A549 (cell line): ENCODE measurements at regions of chr7 and their contacts with region 1.

Region 1: DNA sequence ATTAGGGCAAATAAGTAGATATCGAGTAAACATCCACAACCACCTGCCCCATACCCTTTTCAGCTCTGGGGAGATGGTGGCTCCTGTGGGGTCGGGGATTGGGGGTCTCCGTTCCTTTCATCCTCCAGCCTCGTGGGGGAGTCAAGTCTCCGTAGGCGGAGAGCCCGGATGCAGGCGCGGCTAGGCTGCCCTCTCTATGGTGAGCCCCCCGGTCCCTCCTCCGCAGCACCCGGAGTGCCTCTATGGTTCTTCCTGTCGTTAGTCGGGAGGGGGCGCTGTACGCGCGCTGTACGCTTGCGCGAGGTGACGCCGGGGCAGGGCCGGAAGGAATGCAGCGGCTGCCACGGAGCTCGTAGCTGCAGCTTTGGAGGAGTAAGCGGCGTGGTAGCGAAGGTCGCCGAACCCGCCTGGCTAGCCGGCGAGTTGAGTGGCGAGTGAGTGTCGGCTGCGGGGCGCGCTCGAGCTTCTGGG is 14.8 kb upstream of the MMD2 start:
- DNase-seq: peak; percentile 74 to 95
- ATAC-seq: peak; percentile 96 to 98
- H3K4me3 ChIP-seq: peak overlapping the region; percentile 87
- H3K27ac ChIP-seq: peak overlapping the region; percentile 92 to 95
- H3K4me1 ChIP-seq: peaks cover 9% of the 10 kb centered on the region; the same call in 1 of the 3 replicates
- CTCF ChIP-seq: peak; percentile 85
- EP300 ChIP-seq: no peak
- POLR2A ChIP-seq: peak; percentile 94
- RAD21 ChIP-seq: peak; percentile 67

Region 2: GRCh38 chr7:4906682-4907081 is 67.1 kb before region 1 on chr7:
- CTCF ChIA-PET with region 1: no interaction called
- POLR2A ChIA-PET with region 1: no interaction called
- DNase-seq: peak in 1 of 2 experiments; percentile 37
- ATAC-seq: peak in 1 of 2 experiments; percentile 42; a peak in 2 of 6 replicates
- H3K4me3 ChIP-seq: no peak overlapping the region
- H3K27ac ChIP-seq: no peak overlapping the region
- H3K4me1 ChIP-seq: no peaks in the 10 kb centered on the region
- CTCF ChIP-seq: no peak
- EP300 ChIP-seq: no peak
- POLR2A ChIP-seq: no peak
- RAD21 ChIP-seq: no peak

Region 3: GRCh38 chr7:4951903-4952636 is 21.7 kb before region 1 on chr7:
- CTCF ChIA-PET with region 1: interaction called, 21 read pairs
- POLR2A ChIA-PET with region 1: no interaction called
- DNase-seq: no peak
- ATAC-seq: peak; percentile 74 to 88
- H3K4me3 ChIP-seq: no peak overlapping the region
- H3K27ac ChIP-seq: no peak overlapping the region
- H3K4me1 ChIP-seq: no peaks in the 10 kb centered on the region
- CTCF ChIP-seq: no peak
- EP300 ChIP-seq: no peak
- POLR2A ChIP-seq: no peak
- RAD21 ChIP-seq: no peak

Region 4: DNA sequence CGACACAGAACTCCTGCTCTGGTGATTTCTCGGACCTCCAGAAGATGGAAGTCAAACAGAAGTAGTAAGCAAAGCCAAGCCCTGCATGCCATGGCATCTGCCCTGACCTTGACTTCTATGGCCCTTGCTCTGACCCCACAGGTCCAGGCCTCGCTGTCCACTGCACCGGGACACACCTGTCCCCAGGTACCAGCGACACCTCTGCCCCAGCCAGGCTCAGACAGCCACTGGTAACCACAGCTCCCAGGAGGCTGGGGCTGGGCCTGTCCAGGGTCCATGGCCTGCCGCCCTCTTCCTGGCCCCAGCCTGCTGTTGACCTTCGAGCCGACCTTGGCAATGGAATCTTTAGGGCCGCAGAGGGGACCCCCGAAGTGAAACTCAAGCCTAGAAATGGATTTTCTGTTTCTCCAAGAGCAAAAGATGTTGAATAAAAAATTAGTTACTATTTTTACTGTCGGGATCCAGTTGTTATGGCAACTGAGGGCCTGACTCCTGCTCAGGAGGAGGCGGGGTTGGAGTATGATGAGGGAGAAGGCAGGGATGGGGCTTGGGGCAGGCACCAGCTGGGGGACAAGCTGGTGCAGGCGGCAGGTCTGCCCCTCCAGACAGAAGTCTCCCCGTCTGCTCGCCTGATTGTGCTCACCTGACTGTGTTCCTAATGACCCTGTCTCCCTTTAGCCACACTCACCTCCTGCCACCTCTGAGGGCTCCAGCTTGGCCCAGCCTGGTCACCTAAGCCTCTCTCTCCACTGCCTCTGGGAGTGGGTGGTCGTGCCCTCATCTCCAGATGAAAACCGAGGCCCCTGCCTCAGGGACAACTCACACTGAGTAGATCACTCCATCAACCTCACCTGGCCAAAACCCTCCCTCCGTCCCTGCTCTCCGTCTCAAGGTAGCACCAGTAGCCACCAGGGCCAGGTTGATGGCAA is 10.6 kb before region 1 on chr7:
- CTCF ChIA-PET with region 1: interaction called, 16 read pairs
- POLR2A ChIA-PET with region 1: no interaction called
- DNase-seq: no peak
- ATAC-seq: peak; percentile 18 to 40; a peak in 3 of 6 replicates
- H3K4me3 ChIP-seq: no peak overlapping the region
- H3K27ac ChIP-seq: no peak overlapping the region
- H3K4me1 ChIP-seq: no peaks in the 10 kb centered on the region
- CTCF ChIP-seq: no peak
- EP300 ChIP-seq: no peak
- POLR2A ChIP-seq: no peak
- RAD21 ChIP-seq: no peak

Region 5: GRCh38 chr7:5086256-5086655 is 112.5 kb after region 1 on chr7:
- CTCF ChIA-PET with region 1: interaction called, 16 read pairs
- POLR2A ChIA-PET with region 1: no interaction called
- DNase-seq: no peak
- ATAC-seq: peak in 1 of 2 experiments; percentile 35; a peak in 3 of 6 replicates
- H3K4me3 ChIP-seq: no peak overlapping the region
- H3K27ac ChIP-seq: no peak overlapping the region
- H3K4me1 ChIP-seq: no peaks in the 10 kb centered on the region
- CTCF ChIP-seq: no peak
- EP300 ChIP-seq: no peak
- POLR2A ChIP-seq: no peak
- RAD21 ChIP-seq: no peak